ENCODE measurements at regions of chr9 and their contacts with region 1.

Region 1: GRCh38 chr9:125261501-125262293 is at the start of gene GAPVD1:
- DNase-seq: peak; percentile 98
- ATAC-seq: peak; percentile 93
- H3K4me3 ChIP-seq: peak within 1 kb of the TSS; percentile 74 to 100 (median 88)
- H3K4me3 Mint-ChIP-seq: peak within 1 kb of the TSS; percentile 99
- H3K27ac ChIP-seq: peak within 1 kb of the TSS; percentile 96 to 100
- H3K27ac Mint-ChIP-seq: peak within 1 kb of the TSS; percentile 100
- H3K4me1 ChIP-seq: peaks cover 20 to 27% of the 10 kb centered on the region in 2 donors
- H3K4me1 Mint-ChIP-seq: peaks cover 42% of the 10 kb centered on the region
- H3K27me3 ChIP-seq: no peaks in the 10 kb centered on the region
- H3K27me3 Mint-ChIP-seq: no peaks in the 10 kb centered on the region
- CTCF ChIP-seq: peak; percentile 47
- total RNA-seq, gene GAPVD1: 61.2 and 65.3 TPM in 2 replicates

Region 2: GRCh38 chr9:124415102-124415851 is 846.4 kb before region 1 on chr9 and contains the start of gene PSMB7:
- CTCF ChIA-PET with region 1: no interaction called
- POLR2A ChIA-PET with region 1: no interaction called
- intact Hi-C with region 1: loop called (anchors 5 kb)
- DNase-seq: peak; percentile 98
- ATAC-seq: peak; percentile 96
- H3K4me3 ChIP-seq: peak within 1 kb of the TSS; percentile 81 to 89 (median 87)
- H3K4me3 Mint-ChIP-seq: peak within 1 kb of the TSS; percentile 98
- H3K27ac ChIP-seq: peak within 1 kb of the TSS; percentile 48 to 82
- H3K27ac Mint-ChIP-seq: peak within 1 kb of the TSS; percentile 90
- H3K4me1 ChIP-seq: peaks cover 6 to 27% of the 10 kb centered on the region in 2 donors
- H3K4me1 Mint-ChIP-seq: peaks cover 29% of the 10 kb centered on the region
- H3K27me3 ChIP-seq: no peaks in the 10 kb centered on the region
- H3K27me3 Mint-ChIP-seq: no peaks in the 10 kb centered on the region
- CTCF ChIP-seq: peak; percentile 89
- total RNA-seq, gene PSMB7: 69.7 and 73.1 TPM in 2 replicates

Region 3: DNA sequence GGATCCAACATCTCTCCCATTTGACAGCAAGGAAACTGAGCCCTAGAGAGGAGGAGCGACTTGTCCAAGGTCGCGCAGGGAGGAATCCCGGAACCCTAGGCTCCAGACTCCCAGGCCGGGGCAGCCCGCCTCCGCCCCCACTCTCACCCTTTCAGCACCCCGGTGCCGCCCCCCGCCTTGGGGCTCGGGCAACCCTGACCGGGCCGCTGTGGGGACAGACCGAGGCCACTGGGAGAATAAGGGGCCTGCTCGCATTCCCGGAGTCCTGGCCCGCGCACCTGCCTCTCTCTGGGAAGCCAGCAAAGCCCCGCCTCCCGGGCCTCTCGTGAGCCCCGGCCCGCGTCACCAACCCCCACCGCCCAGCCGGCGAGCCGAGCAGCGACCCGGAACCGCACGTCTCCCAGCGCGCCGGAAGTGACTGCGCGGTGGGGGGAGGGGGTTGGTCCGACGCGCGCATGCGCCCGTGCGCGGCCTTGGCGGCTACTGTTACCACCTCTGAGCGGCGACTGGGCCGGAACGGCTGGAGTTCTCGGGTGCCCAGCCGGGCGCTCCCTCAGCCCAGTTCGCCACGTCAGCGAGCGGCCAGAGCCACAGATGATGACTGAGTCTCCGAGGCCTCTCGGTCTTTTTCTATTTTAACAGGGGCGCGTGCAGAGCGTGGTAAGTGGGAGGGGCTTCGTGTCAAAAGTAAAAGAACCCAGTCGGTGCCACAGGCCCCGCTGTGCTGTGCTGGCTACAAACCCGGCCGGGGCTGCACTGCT is 320.8 kb before region 1 on chr9 and contains the start of gene GOLGA1:
- CTCF ChIA-PET with region 1: no interaction called
- POLR2A ChIA-PET with region 1: interaction called, 4 read pairs
- intact Hi-C with region 1: loop called (anchors 5 kb)
- DNase-seq: peak; percentile 98
- ATAC-seq: peak; percentile 88
- H3K4me3 ChIP-seq: peak within 1 kb of the TSS; percentile 73 to 95 (median 91)
- H3K4me3 Mint-ChIP-seq: peak within 1 kb of the TSS; percentile 85
- H3K27ac ChIP-seq: peak within 1 kb of the TSS; percentile 98
- H3K27ac Mint-ChIP-seq: peak within 1 kb of the TSS; percentile 90
- H3K4me1 ChIP-seq: peaks cover 16 to 17% of the 10 kb centered on the region in 2 donors
- H3K4me1 Mint-ChIP-seq: peaks cover 26% of the 10 kb centered on the region
- H3K27me3 ChIP-seq: no peaks in the 10 kb centered on the region
- H3K27me3 Mint-ChIP-seq: no peaks in the 10 kb centered on the region
- CTCF ChIP-seq: no peak
- total RNA-seq, gene GOLGA1: 24.6 and 26.2 TPM in 2 replicates

Region 4: DNA sequence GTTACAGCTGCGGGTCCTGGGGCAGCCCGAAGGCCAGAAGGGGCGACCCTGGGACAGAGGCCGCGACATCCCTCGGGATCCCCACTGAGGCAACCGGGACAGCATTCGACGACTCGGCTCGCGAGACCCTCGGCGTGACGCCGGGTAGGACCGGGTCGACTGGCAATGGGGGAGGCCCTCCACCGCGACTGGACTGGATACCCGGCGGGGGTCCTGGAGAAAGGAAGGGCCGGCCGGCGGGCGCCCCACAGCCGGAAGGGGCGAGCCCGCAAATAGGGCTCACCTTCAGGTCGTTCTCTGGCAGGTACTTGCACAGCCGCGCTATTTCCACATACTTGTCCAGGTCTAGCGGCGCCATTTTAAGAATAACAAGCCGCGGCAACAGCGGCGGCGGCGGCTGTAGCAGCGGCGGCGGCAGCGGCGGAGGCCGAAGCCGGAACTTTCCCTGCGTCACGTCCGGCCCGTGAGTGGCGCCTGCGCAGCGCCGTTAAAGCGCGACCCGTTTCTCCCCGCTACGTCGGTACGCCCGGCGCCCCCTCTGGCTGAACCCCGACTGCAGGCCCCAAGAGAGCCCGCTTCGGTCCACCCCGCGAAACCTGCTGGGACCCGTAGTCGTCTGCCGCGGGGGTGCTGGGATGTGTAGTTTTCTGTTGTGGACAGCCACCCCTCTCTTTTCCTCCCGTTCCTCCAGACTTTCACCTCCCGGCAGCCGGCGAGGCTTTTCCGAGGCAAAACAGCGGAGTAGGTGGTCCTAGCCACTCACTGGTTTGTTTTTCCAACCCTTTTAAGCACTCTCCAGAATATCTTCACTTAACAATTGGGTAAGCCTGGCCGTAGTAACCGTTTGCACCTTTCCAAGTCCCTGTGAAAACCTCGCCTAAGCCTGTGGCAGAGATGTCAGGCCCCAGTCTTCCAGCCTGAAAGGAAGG is 72.1 kb before region 1 on chr9 and contains the start of gene PPP6C:
- CTCF ChIA-PET with region 1: no interaction called
- POLR2A ChIA-PET with region 1: interaction called, 7 read pairs
- intact Hi-C with region 1: loop called (anchors 1 kb)
- DNase-seq: peak; percentile 98
- ATAC-seq: peak; percentile 98
- H3K4me3 ChIP-seq: peak within 1 kb of the TSS; percentile 89 to 99 (median 99)
- H3K4me3 Mint-ChIP-seq: peak within 1 kb of the TSS; percentile 97
- H3K27ac ChIP-seq: peak within 1 kb of the TSS; percentile 91 to 98
- H3K27ac Mint-ChIP-seq: peak within 1 kb of the TSS; percentile 96
- H3K4me1 ChIP-seq: peaks cover 19 to 27% of the 10 kb centered on the region in 2 donors
- H3K4me1 Mint-ChIP-seq: peaks cover 39% of the 10 kb centered on the region
- H3K27me3 ChIP-seq: no peaks in the 10 kb centered on the region
- H3K27me3 Mint-ChIP-seq: no peaks in the 10 kb centered on the region
- CTCF ChIP-seq: peak; percentile 78
- total RNA-seq, gene PPP6C: 36.1 and 38.6 TPM in 2 replicates

Region 5: DNA sequence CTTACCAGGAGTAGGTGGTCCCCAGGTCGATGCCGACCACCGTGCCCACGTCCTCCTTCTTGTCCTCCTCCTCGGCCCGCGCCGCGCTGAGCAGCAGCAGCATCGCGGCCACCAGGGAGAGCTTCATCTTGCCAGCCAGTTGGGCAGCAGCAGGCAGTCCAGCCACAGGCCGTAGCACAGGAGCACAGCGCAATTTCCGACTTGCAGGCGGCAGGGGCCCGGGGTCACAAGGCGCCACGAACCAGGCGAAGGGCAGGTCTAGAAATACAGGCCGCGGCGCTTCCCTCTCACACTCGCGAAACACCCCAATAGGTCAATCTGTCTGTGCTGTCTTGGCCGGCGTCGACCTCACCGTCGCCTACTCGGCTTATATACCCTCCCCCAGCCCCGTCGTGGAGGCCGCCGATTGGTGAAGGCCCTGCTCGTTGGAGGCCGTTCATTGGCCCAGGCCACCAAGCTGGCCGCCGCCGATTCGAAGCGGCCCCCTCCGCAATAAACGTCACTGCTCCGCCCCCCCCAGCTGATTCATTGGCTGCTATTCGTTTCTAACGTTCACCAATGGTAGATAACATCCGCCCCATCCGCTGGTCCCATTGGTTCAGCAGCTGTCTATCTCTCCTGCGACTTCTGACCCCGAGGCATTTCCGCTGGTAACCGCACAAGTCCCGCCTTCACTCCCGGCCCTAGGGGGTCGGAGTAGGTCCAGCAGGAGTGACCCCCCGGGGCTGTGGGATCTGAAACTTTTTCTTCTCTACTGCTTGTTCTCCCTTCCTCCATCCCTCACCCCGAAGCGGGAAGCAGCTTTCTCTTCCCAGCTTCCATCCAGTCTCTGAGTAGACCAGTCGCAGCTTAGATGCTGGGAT is 20.5 kb before region 1 on chr9 and contains the start of gene HSPA5:
- CTCF ChIA-PET with region 1: interaction called, 14 read pairs
- POLR2A ChIA-PET with region 1: interaction called, 25 read pairs
- intact Hi-C with region 1: loop called (anchors 1 kb)
- DNase-seq: peak; percentile 100
- ATAC-seq: peak; percentile 90
- H3K4me3 ChIP-seq: peak within 1 kb of the TSS; percentile 82 to 98 (median 92)
- H3K4me3 Mint-ChIP-seq: peak within 1 kb of the TSS; percentile 95
- H3K27ac ChIP-seq: peak within 1 kb of the TSS; percentile 98 to 99
- H3K27ac Mint-ChIP-seq: peak within 1 kb of the TSS; percentile 93
- H3K4me1 ChIP-seq: peaks cover 16 to 26% of the 10 kb centered on the region in 2 donors
- H3K4me1 Mint-ChIP-seq: peaks cover 50% of the 10 kb centered on the region
- H3K27me3 ChIP-seq: no peaks in the 10 kb centered on the region
- H3K27me3 Mint-ChIP-seq: no peaks in the 10 kb centered on the region
- CTCF ChIP-seq: no peak
- total RNA-seq, gene HSPA5: 40.1 and 42.6 TPM in 2 replicates

Region 6: GRCh38 chr9:126532019-126532462 is 1270.3 kb after region 1 on chr9:
- CTCF ChIA-PET with region 1: no interaction called
- POLR2A ChIA-PET with region 1: no interaction called
- intact Hi-C with region 1: no loop called
- DNase-seq: no peak
- ATAC-seq: no peak
- H3K4me3 ChIP-seq: no peak overlapping the region
- H3K4me3 Mint-ChIP-seq: peak overlapping the region; percentile 79
- H3K27ac ChIP-seq: peak overlapping the region in 1 of 2 donors; percentile 18
- H3K27ac Mint-ChIP-seq: peak overlapping the region; percentile 91
- H3K4me1 ChIP-seq: peaks cover 43 to 58% of the 10 kb centered on the region in 2 donors
- H3K4me1 Mint-ChIP-seq: peaks cover 48% of the 10 kb centered on the region
- H3K27me3 ChIP-seq: no peaks in the 10 kb centered on the region
- H3K27me3 Mint-ChIP-seq: no peaks in the 10 kb centered on the region
- CTCF ChIP-seq: no peak

Measured in B cell (primary cell).